Mammary epithelial cell (primary cell): ENCODE measurements at regions of chr1 and their contacts with region 1.

Region 1: DNA sequence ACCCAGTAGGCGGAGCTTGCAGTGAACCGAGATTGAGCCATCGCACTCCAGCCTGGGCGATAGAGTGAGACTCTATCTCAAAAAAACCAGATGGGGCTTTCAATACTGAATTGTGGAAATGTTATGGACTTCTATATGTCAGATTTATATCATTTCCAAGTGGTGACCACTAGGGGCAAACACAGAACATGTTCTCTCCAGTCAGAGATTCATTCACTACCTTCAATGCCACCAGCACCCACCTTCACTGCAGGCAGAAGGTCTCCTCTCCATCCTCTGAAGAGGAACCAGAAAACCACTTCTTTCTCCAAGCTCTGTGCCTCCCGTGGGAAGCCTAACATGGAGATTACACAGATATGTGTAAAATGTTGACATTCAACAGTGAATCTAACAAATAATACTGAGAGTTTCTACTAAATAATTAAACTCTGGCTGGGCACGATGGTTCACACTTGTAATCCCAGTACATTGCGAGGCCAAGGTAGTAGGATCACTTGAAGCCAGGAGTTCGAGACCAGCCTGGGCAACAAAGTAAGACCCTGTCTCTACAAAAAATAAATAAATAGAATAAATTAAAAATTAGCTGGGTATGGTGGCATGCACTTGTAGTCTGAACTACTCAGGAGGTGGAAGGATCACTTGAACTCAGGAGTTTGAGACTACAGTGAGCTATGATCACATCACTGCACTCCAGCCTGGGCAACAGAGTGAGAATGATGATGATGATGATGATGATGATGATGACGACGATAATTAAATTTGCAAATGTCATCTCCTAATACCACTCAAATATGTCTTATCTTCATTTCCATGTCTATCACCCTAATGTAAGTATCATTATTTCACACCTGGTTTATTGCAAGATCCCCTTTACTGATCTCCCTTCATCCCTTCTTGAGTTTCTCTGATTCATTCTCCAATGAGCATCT is 151.1 kb downstream of the ZNF281 start:
- DNase-seq: peak; percentile 9
- H3K4me3 ChIP-seq: no peak overlapping the region
- H3K27ac ChIP-seq: no peak overlapping the region
- H3K4me1 ChIP-seq: no peaks in the 10 kb centered on the region
- H3K27me3 ChIP-seq: peaks cover 3% of the 10 kb centered on the region
- CTCF ChIP-seq: peak; percentile 47 to 54

Region 2: DNA sequence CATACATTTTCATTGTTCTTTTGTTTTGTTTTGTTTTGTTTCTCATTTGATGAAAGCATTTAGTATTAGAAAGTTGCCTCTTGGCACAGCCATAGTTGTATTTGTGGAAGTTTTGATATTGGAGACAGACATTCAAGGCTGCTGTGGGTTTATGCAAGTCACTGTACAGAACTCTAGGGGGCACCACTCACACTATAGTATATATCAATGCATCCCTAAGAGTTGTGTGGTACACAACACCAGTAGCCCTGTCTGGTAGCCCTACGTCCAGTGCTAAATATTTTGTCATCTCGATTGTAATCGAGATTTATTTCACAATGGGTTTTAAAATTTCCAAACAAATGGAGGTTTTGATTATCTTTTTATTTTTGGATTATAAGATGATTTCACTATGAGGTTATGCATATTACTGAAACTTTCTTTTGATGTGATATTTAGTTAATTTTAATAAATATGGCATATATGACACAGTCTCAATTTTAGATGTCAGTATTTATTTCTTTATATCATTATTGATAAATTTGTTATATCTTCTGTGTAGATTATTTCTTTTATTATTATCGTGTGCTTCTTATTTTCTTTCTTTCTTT is 119.0 kb before region 1 on chr1:
- CTCF ChIA-PET with region 1: no interaction called
- dilution Hi-C with region 1: no loop called
- in situ Hi-C with region 1: loop called in 1 of 2 experiments (anchors 25 kb)
- intact Hi-C with region 1: loop called (anchors 1 kb)
- DNase-seq: peak; percentile 32
- H3K4me3 ChIP-seq: no peak overlapping the region
- H3K27ac ChIP-seq: no peak overlapping the region
- H3K4me1 ChIP-seq: no peaks in the 10 kb centered on the region
- H3K27me3 ChIP-seq: no peaks in the 10 kb centered on the region
- CTCF ChIP-seq: peak; percentile 72 to 78

Region 3: DNA sequence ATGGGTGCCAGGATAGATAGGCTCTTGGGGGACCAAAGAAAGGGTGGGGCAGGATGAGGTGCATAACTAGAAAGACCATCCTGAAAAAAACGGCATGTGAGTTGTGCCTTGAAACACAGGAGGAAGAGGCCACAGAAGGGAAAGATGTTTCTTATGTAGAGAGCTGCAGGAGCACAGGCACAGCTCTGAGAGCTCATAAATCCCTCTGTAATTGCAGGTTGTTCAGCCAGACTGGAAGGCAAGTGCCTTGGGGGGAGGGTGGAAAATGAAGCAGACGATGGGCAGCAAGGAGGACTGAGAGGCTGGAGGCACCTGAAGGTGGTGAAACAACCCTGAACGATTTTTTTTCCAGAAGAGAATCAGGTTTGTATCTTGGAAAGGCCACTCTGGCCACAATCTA is 60.5 kb before region 1 on chr1:
- CTCF ChIA-PET with region 1: no interaction called
- dilution Hi-C with region 1: no loop called
- in situ Hi-C with region 1: no loop called
- intact Hi-C with region 1: no loop called
- DNase-seq: no peak
- H3K4me3 ChIP-seq: no peak overlapping the region
- H3K27ac ChIP-seq: no peak overlapping the region
- H3K4me1 ChIP-seq: no peaks in the 10 kb centered on the region
- H3K27me3 ChIP-seq: peaks cover 5% of the 10 kb centered on the region
- CTCF ChIP-seq: no peak

Region 4: GRCh38 chr1:200364091-200364759 is 105.5 kb after region 1 on chr1:
- CTCF ChIA-PET with region 1: no interaction called
- dilution Hi-C with region 1: no loop called
- in situ Hi-C with region 1: no loop called
- intact Hi-C with region 1: no loop called
- DNase-seq: no peak
- H3K4me3 ChIP-seq: no peak overlapping the region
- H3K27ac ChIP-seq: no peak overlapping the region
- H3K4me1 ChIP-seq: peaks cover 12% of the 10 kb centered on the region
- H3K27me3 ChIP-seq: no peaks in the 10 kb centered on the region
- CTCF ChIP-seq: no peak

Region 5: DNA sequence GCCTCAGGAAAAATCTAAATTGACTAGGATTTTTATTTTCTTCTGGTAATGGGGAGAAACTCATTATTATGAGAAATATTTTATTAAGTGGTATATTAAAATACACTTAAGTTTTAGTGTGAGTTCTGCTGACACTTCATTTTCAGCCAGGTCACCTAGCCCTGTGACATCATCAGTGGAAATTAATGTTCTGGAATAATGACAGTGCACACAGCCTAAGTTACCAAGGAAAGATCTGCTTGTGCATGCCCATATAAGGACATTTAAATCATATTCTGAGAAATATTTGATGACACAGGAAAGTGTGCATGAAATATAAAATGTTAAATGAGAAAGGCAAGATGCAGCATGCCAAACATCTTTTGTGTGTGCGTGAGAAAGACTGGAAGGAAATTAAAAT is 259.8 kb after region 1 on chr1:
- CTCF ChIA-PET with region 1: no interaction called
- dilution Hi-C with region 1: no loop called
- in situ Hi-C with region 1: no loop called
- intact Hi-C with region 1: no loop called
- DNase-seq: no peak
- H3K4me3 ChIP-seq: no peak overlapping the region
- H3K27ac ChIP-seq: no peak overlapping the region
- H3K4me1 ChIP-seq: peaks cover 2% of the 10 kb centered on the region
- H3K27me3 ChIP-seq: peaks cover 5% of the 10 kb centered on the region
- CTCF ChIP-seq: no peak